Activated CD4-positive, alpha-beta memory T cell treated with anti-CD3 and anti-CD28 coated beads, Interleukin-2, amount 10 ng/mL, durations not matched to agents 7 days and 5 days (primary cell): ENCODE measurements at regions of chr2 and their contacts with region 1.

Region 1: DNA sequence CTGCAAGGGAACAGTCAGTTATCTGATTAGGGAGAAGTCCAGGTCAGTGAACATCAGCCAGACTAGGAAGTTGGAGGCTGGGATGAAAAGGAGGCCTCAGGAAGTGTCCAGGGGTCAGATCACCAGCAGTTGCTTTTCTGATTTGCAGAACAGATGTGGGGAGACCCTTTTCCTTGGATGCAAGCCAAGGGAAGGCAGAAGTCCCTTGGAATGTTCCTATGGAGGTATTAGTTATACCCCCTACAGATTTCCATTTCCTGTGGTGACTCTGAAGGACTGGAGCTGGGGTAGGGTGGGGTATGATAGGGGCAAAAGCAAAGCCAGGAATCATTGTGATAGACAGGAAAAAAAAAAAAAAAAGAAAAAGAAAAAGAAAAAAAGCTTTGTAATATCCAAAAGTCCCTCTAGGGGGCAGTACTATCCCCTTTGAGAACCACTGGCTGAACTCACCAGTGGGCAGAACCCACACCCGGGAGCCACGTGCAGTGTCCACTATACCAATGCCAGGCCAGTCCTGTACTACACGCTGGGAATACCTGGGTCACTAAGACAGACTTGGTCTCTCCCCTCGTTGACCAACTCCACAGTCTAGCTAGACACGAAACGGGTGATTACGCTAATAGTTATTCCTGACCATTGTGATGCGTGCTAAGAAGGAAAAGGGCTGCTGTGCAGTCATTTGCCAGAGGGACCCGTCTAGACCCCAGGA is 7.4 kb downstream of the DYSF start:
- DNase-seq: no peak
- H3K4me3 Mint-ChIP-seq: no peak overlapping the region
- H3K27ac Mint-ChIP-seq: no peak overlapping the region
- H3K4me1 Mint-ChIP-seq: no peaks in the 10 kb centered on the region
- H3K27me3 Mint-ChIP-seq: peaks cover 10% of the 10 kb centered on the region

Region 2: GRCh38 chr2:71423817-71424420 is 36.8 kb before region 1 on chr2:
- CTCF ChIA-PET with region 1: no interaction called
- POLR2A ChIA-PET with region 1: no interaction called
- DNase-seq: no peak
- H3K4me3 Mint-ChIP-seq: no peak overlapping the region
- H3K27ac Mint-ChIP-seq: no peak overlapping the region
- H3K4me1 Mint-ChIP-seq: peaks cover 6% of the 10 kb centered on the region
- H3K27me3 Mint-ChIP-seq: no peaks in the 10 kb centered on the region

Region 3: DNA sequence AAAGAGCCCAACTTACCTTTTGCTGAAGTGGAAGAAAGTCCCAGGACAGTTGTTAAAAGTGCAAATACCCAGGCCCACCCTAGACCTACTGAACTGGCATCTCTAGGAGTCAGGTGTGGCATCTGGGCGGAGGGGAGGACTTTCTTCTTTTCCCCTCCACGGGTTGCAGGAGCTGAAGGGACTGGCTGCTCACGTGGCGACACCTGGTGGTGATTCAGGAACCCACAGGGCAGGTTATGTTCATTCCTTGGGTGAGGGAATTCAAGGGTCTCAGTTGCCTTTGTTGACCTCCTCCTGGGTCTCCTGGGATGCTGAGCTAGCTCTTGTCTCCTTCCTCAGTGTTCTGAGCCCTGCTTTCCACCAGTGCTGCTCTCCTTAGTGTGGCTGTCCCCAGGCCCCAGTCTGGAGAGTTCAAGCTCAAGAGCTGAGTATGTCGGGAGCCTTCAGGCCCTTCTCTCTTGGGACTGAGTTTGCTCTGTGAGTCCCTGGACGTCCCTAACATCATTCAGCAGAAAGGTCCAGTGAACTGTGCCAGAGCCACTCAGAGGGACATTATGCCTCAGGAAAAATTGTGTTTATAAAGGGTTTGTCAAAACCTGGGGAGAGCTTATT is 49.6 kb after region 1 on chr2:
- CTCF ChIA-PET with region 1: interaction called, 18 read pairs
- POLR2A ChIA-PET with region 1: no interaction called
- DNase-seq: peak; percentile 72
- H3K4me3 Mint-ChIP-seq: no peak overlapping the region
- H3K27ac Mint-ChIP-seq: no peak overlapping the region
- H3K4me1 Mint-ChIP-seq: no peaks in the 10 kb centered on the region
- H3K27me3 Mint-ChIP-seq: peaks cover 4% of the 10 kb centered on the region